ENCODE measurements at regions of chr6 and their contacts with region 1.

Region 1: DNA sequence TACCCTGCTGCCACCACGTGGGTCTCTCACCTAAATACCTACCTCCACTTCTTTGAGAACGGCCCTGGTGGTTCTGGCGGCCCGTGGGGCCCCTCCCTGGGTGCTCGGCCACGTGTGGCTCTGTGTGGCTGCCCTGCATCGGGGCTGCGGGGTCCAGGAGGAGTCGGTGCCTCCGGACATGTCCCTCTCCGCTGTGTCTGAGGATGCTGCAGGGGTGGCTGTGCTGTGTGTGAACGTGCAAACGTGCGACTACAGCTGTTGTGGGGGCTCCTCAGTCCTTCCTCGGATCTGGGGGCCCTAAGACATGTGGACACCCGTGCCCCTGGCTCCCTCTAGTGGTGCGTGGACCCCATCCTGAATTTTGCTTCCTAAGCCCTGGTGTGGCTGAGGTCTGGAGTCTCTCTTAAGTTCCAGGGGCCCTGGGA is 691.8 kb downstream of the QKI start:
- DNase-seq: peak in 1 of 2 donors; percentile 75
- ATAC-seq: no peak
- H3K4me3 ChIP-seq: no peak overlapping the region
- H3K27ac ChIP-seq: peak overlapping the region; percentile 95 to 98 (median 98)
- H3K4me1 ChIP-seq: peaks cover 56 to 66% of the 10 kb centered on the region in 2 donors
- H3K27me3 ChIP-seq: no peaks in the 10 kb centered on the region
- CTCF ChIP-seq: peak; percentile 38 to 67 (median 57)
- POLR2A ChIP-seq: no peak

Region 2: DNA sequence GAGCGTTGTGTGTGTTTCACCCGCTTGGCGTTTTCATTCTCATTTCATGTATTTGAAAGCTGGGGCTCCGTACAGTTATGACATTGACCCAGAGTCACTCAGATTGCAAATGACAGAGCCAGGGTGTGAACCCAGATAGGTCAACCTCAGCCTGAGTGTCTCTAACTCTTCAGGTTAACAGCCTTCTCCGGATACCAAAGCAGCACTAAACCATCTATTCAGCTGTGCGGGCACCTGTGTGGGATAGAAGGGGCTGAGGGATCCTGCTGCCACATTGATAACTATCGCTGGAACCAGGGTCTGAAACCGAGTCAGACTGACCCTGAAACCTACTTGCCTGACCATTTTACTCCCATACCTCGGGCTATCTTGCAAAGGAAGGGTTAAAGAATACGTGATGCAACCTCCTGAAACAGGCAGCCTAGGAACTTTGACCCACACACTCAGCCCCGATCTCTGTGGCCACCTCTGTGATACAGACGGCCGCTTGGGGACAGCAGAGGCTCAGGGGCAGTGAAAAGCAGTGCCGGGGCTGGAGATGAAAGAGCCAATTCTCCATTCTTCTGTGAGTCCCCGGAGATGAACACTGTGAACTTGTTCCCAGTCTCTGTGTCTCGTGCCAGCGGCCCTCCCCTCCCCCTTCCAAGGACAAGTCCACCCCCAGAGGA is 925.3 kb before region 1 on chr6:
- in situ Hi-C with region 1: loop called (anchors 5 to 10 kb)
- intact Hi-C with region 1: loop called (anchors 1 kb)
- DNase-seq: peak; percentile 64 to 87
- ATAC-seq: peak; percentile 89 to 96
- H3K4me3 ChIP-seq: peak overlapping the region; percentile 17 to 54 (median 42)
- H3K27ac ChIP-seq: peak overlapping the region; percentile 50 to 69 (median 63)
- H3K4me1 ChIP-seq: peaks cover 17 to 31% of the 10 kb centered on the region in 2 donors
- H3K27me3 ChIP-seq: no peaks in the 10 kb centered on the region
- CTCF ChIP-seq: peak; percentile 81 to 97 (median 87)
- POLR2A ChIP-seq: no peak

Region 3: DNA sequence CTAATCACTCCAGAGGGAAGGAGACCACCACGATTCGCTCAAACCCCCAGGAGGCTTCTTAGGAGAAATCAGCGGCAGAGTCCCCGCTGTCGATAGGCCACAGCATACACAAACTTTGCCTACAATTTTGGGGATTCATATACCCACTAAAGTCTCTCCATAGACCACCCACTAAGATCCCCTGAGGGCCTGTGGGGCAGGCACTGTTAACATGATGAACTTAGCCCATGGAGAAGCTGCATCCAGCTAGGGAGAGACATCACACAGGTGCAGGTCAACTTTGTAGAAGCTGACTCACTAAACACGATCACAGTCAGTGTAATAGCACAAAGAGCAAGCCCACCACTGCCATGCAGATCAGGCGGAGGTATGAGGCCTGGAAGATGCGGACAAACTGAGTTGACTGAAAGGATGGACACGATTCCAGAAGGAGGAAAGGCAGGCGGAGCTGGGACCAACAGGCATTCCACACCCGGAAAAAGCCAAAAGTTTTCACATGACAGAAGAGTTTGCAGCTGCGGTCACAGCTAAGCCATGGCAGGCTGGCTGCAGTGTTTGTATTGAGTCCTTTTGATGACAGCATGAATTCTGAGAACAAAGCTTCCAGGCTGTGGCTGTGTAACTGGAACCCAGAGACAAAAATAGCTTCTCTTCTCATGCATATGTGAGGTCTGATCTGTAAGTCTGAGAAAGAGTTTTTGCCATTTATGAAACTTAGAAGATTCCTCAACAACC is 767.5 kb before region 1 on chr6:
- in situ Hi-C with region 1: no loop called
- intact Hi-C with region 1: loop called (anchors 2 kb)
- DNase-seq: peak; percentile 73 to 84
- ATAC-seq: peak; percentile 82 to 83
- H3K4me3 ChIP-seq: peak overlapping the region in 3 of 4 donors; percentile 10 to 16 (median 15)
- H3K27ac ChIP-seq: peak overlapping the region; percentile 92 to 99 (median 94)
- H3K4me1 ChIP-seq: peaks cover 65 to 69% of the 10 kb centered on the region in 2 donors
- H3K27me3 ChIP-seq: no peaks in the 10 kb centered on the region
- CTCF ChIP-seq: no peak
- POLR2A ChIP-seq: no peak

Region 4: GRCh38 chr6:163427498-163428254 is 678.7 kb before region 1 on chr6:
- in situ Hi-C with region 1: loop called in 3 of 4 experiments (anchors 5 to 10 kb)
- intact Hi-C with region 1: no loop called
- DNase-seq: no peak
- ATAC-seq: peak; percentile 62 to 68
- H3K4me3 ChIP-seq: peak overlapping the region in 3 of 4 donors; percentile 13 to 26 (median 17)
- H3K27ac ChIP-seq: peak overlapping the region; percentile 98 to 99 (median 99)
- H3K4me1 ChIP-seq: peaks cover 96 to 100% of the 10 kb centered on the region in 2 donors
- H3K27me3 ChIP-seq: no peaks in the 10 kb centered on the region
- CTCF ChIP-seq: peak in 4 of 5 experiments; percentile 33 to 83 (median 44)
- POLR2A ChIP-seq: no peak

Region 5: DNA sequence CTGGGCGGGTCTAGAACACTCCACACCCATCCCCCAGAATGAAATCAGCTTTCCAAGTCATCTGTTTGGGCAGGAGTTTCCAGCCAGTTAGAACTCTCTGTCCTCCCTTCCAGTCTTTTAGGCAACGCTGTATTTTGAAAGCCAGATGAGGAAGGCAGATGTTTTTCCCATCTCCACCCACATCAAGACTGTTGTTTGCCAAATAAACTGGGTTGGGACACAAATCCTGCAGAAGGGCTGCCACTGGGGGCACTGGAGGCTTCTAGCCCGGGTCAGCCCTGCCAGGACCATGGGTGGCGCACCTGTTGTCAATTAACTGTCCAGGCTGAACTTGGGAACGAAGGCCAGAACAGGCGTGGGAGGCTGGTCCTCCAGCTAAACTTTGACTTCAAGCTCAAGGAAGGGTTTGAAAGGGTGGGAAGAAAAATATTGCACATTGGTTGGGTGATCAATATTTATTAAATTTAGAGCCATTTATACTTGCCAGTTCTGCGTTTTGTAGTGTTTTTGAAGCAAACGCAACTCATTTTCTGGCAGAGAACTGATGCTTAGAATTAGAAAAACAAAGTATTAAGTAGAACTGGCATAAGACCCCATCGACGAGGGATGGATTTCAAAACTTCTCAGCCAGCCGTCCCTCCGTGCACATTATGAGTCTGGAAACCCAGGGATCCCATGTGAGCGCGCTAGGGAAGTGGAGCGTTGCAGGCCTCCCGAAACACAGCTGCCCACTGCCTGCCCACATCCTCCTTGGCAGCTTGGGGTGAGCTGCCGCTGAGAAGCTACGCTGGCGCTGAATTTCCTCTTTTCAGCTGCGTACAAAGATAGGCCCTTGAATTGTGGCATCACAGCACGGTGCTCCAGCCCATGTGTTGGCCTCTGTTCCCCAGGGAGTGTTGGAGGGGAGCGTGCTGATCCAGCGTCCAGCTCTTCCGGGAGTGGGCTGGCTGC is 394.5 kb before region 1 on chr6:
- in situ Hi-C with region 1: loop called in 2 of 4 experiments (anchors 25 kb)
- intact Hi-C with region 1: loop called (anchors 1 kb)
- DNase-seq: peak; percentile 87 to 96
- ATAC-seq: peak; percentile 78
- H3K4me3 ChIP-seq: no peak overlapping the region
- H3K27ac ChIP-seq: peak overlapping the region; percentile 71 to 90 (median 75)
- H3K4me1 ChIP-seq: peaks cover 58 to 63% of the 10 kb centered on the region in 2 donors
- H3K27me3 ChIP-seq: no peaks in the 10 kb centered on the region
- CTCF ChIP-seq: peak; percentile 40 to 66 (median 47)
- POLR2A ChIP-seq: no peak

Region 6: GRCh38 chr6:163965426-163966348 is 140.7 kb before region 1 on chr6:
- in situ Hi-C with region 1: loop called (anchors 5 to 10 kb)
- intact Hi-C with region 1: loop called (anchors 1 kb)
- DNase-seq: peak; percentile 75 to 79
- ATAC-seq: peak; percentile 24 to 51
- H3K4me3 ChIP-seq: peak overlapping the region in 2 of 4 donors; percentile 1
- H3K27ac ChIP-seq: peak overlapping the region; percentile 81 to 99 (median 92)
- H3K4me1 ChIP-seq: peaks cover 49 to 50% of the 10 kb centered on the region in 2 donors
- H3K27me3 ChIP-seq: no peaks in the 10 kb centered on the region
- CTCF ChIP-seq: no peak
- POLR2A ChIP-seq: peak in 1 of 2 donors; percentile 7

Region 7: GRCh38 chr6:164216368-164216767 is 110.0 kb after region 1 on chr6:
- in situ Hi-C with region 1: no loop called
- intact Hi-C with region 1: no loop called
- DNase-seq: no peak
- ATAC-seq: peak; percentile 26 to 27
- H3K4me3 ChIP-seq: peak overlapping the region in 3 of 4 donors; percentile 1 to 24 (median 18)
- H3K27ac ChIP-seq: no peak overlapping the region
- H3K4me1 ChIP-seq: peaks cover 0 to 4% of the 10 kb centered on the region in 2 donors
- H3K27me3 ChIP-seq: no peaks in the 10 kb centered on the region
- CTCF ChIP-seq: peak in 2 of 5 experiments; percentile 28 to 31
- POLR2A ChIP-seq: no peak